ENCODE measurements at regions of chr11 and their contacts with region 1.

Region 1: DNA sequence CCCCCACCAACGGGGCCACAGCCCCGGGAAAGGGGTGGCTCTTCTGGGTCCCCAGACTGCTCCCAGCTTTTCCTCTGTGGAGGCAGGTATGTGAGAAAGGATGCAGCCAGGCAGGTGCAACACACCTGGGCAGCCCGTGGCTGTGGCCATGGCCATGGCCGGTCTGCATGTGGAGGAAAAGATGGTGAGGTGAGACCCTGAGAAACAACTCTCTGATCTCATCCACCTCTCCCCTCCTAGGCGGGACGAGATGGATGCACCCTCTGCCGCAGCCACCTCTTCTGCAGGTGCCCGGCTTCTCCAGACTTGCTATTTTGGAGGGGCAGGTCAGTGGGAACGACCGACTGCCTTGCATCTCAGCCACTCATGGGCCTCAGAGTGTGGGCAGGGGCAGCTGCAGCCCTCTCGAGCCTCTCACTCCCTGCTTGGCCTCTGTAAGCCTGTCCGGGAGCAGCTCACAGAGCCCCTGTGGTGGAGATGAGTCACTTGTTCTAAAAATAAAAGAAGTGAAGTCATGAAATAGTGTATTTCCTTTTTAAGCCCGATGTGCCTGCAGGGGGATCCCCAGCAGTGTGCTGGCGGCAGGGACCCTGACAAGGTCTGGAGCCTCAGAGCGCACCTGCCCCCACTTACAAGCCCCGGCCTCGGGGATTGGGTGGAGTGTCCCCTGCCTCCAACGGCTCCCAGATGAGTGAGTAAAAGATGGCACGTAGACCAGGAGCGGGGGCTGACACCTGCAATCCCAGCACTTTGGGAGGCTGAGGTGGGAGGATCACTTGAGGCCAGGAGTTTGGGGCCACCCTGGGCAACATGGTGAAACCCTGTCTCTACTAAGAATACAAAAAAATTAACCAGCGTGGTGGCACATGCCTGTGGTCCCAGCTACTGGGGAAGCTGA is 10.7 kb downstream of the SMIM38 start:
- DNase-seq: peak; percentile 16 to 77
- H3K4me3 ChIP-seq: peak overlapping the region in 1 of 2 donors; percentile 42
- H3K27ac ChIP-seq: peak overlapping the region in 1 of 2 donors; percentile 9
- H3K4me1 ChIP-seq: peaks cover 10 to 11% of the 10 kb centered on the region in 2 donors
- H3K27me3 ChIP-seq: no peaks in the 10 kb centered on the region
- CTCF ChIP-seq: peak; percentile 7 to 34 (median 23)

Region 2: GRCh38 chr11:69131644-69132300 is 34.7 kb before region 1 on chr11:
- intact Hi-C with region 1: loop called (anchors 5 kb)
- DNase-seq: peak; percentile 26 to 84
- H3K4me3 ChIP-seq: no peak overlapping the region
- H3K27ac ChIP-seq: peak overlapping the region; percentile 72 to 73
- H3K4me1 ChIP-seq: peaks cover 0 to 21% of the 10 kb centered on the region in 2 donors
- H3K27me3 ChIP-seq: no peaks in the 10 kb centered on the region
- CTCF ChIP-seq: peak; percentile 85 to 89 (median 86)